CD4-positive, alpha-beta memory T cell (primary cell): ENCODE measurements at regions of chr6 and their contacts with region 1.

Region 1: DNA sequence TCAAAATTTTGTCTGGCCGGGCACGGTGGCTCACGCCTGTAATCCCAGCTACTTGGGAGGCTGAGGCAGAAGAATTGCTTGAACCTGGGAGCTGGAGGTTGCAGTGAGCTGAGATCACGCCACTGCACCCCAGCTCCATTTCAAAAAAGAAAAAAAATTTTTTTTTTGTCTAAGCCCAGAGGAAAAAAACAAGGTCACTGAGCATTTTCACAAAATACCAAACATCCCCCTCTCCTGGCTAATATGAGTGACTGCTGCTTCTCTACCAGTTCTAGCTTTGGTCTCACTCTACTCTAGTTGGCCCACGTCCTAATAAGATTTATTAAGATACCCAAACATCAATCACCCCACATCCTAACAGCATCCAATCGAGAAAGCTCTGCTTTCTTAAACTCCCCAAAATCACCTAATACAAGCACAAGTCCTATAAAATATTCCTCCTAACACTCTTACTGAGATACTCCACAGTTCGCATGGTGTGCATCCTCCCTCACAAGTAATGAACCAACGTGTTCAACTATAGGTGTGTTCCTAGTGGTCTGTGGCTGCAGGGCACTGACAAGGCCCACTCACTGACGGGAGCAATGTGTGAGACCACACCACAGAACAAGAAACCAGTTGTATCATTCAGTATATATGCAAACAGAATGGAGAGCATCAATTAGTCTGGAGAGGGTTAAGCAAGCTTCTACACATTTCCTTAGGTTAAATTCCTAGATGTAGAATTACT is 64.2 kb downstream of the FKBP5 start:
- DNase-seq: peak in 4 of 5 donors; percentile 62 to 66 (median 64)
- H3K4me3 ChIP-seq: no peak overlapping the region
- H3K4me3 Mint-ChIP-seq: peak overlapping the region in 6 of 8 donors; percentile 1 to 68 (median 46)
- H3K27ac ChIP-seq: no peak overlapping the region
- H3K27ac Mint-ChIP-seq: peak overlapping the region; percentile 12 to 91 (median 80)
- H3K4me1 ChIP-seq: peaks cover 42% of the 10 kb centered on the region
- H3K4me1 Mint-ChIP-seq: peaks cover 18 to 42% (median 28%) of the 10 kb centered on the region in 4 donors
- H3K27me3 ChIP-seq: no peaks in the 10 kb centered on the region
- H3K27me3 Mint-ChIP-seq: no peaks in the 10 kb centered on the region

Region 2: GRCh38 chr6:34810936-34811632 is 813.4 kb before region 1 on chr6:
- CTCF ChIA-PET with region 1: no interaction called
- POLR2A ChIA-PET with region 1: no interaction called
- intact Hi-C with region 1: no loop called
- DNase-seq: no peak
- H3K4me3 ChIP-seq: no peak overlapping the region
- H3K4me3 Mint-ChIP-seq: no peak overlapping the region
- H3K27ac ChIP-seq: no peak overlapping the region
- H3K27ac Mint-ChIP-seq: peak overlapping the region in 2 of 7 donors; percentile 22 to 25
- H3K4me1 ChIP-seq: peaks cover 4% of the 10 kb centered on the region
- H3K4me1 Mint-ChIP-seq: peaks cover 3 to 17% (median 8%) of the 10 kb centered on the region in 4 donors
- H3K27me3 ChIP-seq: no peaks in the 10 kb centered on the region
- H3K27me3 Mint-ChIP-seq: no peaks in the 10 kb centered on the region

Region 3: GRCh38 chr6:35569011-35569461 is 55.5 kb before region 1 on chr6:
- CTCF ChIA-PET with region 1: interaction called, 30 read pairs
- POLR2A ChIA-PET with region 1: interaction called, 3 read pairs
- intact Hi-C with region 1: no loop called
- DNase-seq: peak in 4 of 5 donors; percentile 18 to 33 (median 24)
- H3K4me3 ChIP-seq: no peak overlapping the region
- H3K4me3 Mint-ChIP-seq: no peak overlapping the region
- H3K27ac ChIP-seq: no peak overlapping the region
- H3K27ac Mint-ChIP-seq: peak overlapping the region in 1 of 7 donors; percentile 72
- H3K4me1 ChIP-seq: no peaks in the 10 kb centered on the region
- H3K4me1 Mint-ChIP-seq: peaks cover 0 to 8% (median 4%) of the 10 kb centered on the region in 4 donors
- H3K27me3 ChIP-seq: no peaks in the 10 kb centered on the region
- H3K27me3 Mint-ChIP-seq: peaks cover 3 to 4% of the 10 kb centered on the region in 2 donors

Region 4: GRCh38 chr6:35583893-35584688 is 40.4 kb before region 1 on chr6:
- CTCF ChIA-PET with region 1: interaction called, 490 read pairs
- POLR2A ChIA-PET with region 1: interaction called, 26 read pairs
- intact Hi-C with region 1: loop called (anchors 1 kb)
- DNase-seq: peak; percentile 73 to 78 (median 76)
- H3K4me3 ChIP-seq: no peak overlapping the region
- H3K4me3 Mint-ChIP-seq: peak overlapping the region in 5 of 8 donors; percentile 17 to 63 (median 46)
- H3K27ac ChIP-seq: peak overlapping the region; percentile 12
- H3K27ac Mint-ChIP-seq: peak overlapping the region; percentile 39 to 89 (median 83)
- H3K4me1 ChIP-seq: peaks cover 45% of the 10 kb centered on the region
- H3K4me1 Mint-ChIP-seq: peaks cover 47 to 59% (median 50%) of the 10 kb centered on the region in 4 donors
- H3K27me3 ChIP-seq: no peaks in the 10 kb centered on the region
- H3K27me3 Mint-ChIP-seq: no peaks in the 10 kb centered on the region

Region 5: GRCh38 chr6:35601331-35602132 is 23.0 kb before region 1 on chr6:
- CTCF ChIA-PET with region 1: interaction called, 490 read pairs
- POLR2A ChIA-PET with region 1: interaction called, 150 read pairs
- intact Hi-C with region 1: loop called (anchors 1 kb)
- DNase-seq: peak; percentile 88 to 93 (median 89)
- H3K4me3 ChIP-seq: peak overlapping the region; percentile 33 to 47
- H3K4me3 Mint-ChIP-seq: peak overlapping the region; percentile 66 to 91 (median 86)
- H3K27ac ChIP-seq: peak overlapping the region; percentile 71
- H3K27ac Mint-ChIP-seq: peak overlapping the region; percentile 79 to 97 (median 92)
- H3K4me1 ChIP-seq: peaks cover 97% of the 10 kb centered on the region
- H3K4me1 Mint-ChIP-seq: peaks cover 55 to 79% (median 67%) of the 10 kb centered on the region in 4 donors
- H3K27me3 ChIP-seq: no peaks in the 10 kb centered on the region
- H3K27me3 Mint-ChIP-seq: no peaks in the 10 kb centered on the region

Region 6: GRCh38 chr6:35663447-35664235 is 39.1 kb after region 1 on chr6:
- CTCF ChIA-PET with region 1: interaction called, 10 read pairs
- POLR2A ChIA-PET with region 1: interaction called, 3 read pairs
- intact Hi-C with region 1: no loop called
- DNase-seq: no peak
- H3K4me3 ChIP-seq: peak overlapping the region in 1 of 2 donors; percentile 6
- H3K4me3 Mint-ChIP-seq: no peak overlapping the region
- H3K27ac ChIP-seq: peak overlapping the region; percentile 50
- H3K27ac Mint-ChIP-seq: no peak overlapping the region
- H3K4me1 ChIP-seq: peaks cover 66% of the 10 kb centered on the region
- H3K4me1 Mint-ChIP-seq: peaks cover 12 to 20% (median 17%) of the 10 kb centered on the region in 4 donors
- H3K27me3 ChIP-seq: no peaks in the 10 kb centered on the region
- H3K27me3 Mint-ChIP-seq: no peaks in the 10 kb centered on the region

Region 7: GRCh38 chr6:35688581-35689322 is 64.2 kb after region 1 on chr6 and contains the start of gene FKBP5:
- CTCF ChIA-PET with region 1: interaction called, 19 read pairs
- POLR2A ChIA-PET with region 1: interaction called, 12 read pairs
- intact Hi-C with region 1: no loop called
- DNase-seq: peak; percentile 83 to 87 (median 85)
- H3K4me3 ChIP-seq: peak within 1 kb of the TSS; percentile 51 to 99
- H3K4me3 Mint-ChIP-seq: peak within 1 kb of the TSS; percentile 96 to 100 (median 100)
- H3K27ac ChIP-seq: peak within 1 kb of the TSS; percentile 85
- H3K27ac Mint-ChIP-seq: peak within 1 kb of the TSS; percentile 93 to 98 (median 95)
- H3K4me1 ChIP-seq: peaks cover 22% of the 10 kb centered on the region
- H3K4me1 Mint-ChIP-seq: peaks cover 4 to 30% (median 10%) of the 10 kb centered on the region in 4 donors
- H3K27me3 ChIP-seq: no peaks in the 10 kb centered on the region
- H3K27me3 Mint-ChIP-seq: no peaks in the 10 kb centered on the region
- total RNA-seq, gene FKBP5: 72.9 to 74.2 TPM